ENCODE measurements at regions of chr17 and their contacts with region 1.

Region 1: DNA sequence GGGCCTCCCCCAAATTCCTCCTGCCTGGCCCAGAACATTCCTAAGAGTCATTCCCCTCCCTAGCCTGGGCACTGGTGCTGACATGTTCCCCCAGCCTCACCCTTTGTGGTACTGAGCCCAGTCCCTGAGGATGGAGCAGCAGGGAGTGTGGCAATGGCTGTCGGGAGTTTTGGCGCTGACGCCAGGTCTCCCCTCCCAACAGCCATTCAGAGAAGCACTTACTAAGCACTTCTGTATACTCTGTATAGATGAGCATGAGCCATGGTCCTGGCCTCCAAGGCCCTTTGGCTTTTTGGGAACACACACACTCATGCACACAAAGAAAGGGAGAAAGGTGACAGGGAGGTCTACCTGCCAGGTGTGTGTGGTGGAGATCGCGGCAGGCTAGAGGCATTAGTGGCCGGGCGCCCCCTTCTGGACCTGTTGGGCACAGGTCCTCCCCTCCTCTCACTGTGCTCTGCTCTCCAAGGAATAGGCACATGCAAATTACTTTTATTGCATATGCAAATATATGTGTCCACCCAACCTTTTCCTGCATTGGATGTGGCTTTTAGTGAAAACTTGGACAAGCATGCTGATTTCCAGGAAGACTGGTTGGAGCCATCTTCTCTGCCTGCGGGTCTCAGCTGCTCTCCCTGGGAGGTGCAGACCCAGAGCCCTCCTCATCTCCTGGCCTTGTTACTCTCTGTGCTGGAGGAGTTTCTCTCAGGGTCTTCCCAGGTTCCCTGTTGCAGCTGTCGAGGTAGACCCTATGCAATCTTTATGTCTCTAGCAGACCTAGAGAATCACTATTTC is 17.4 kb upstream of the C17orf107 start:
- DNase-seq: peak; percentile 77
- ATAC-seq: peak; percentile 78

Region 2: GRCh38 chr17:4789901-4790704 is 91.9 kb before region 1 on chr17:
- intact Hi-C with region 1: loop called (anchors 10 kb)
- DNase-seq: peak; percentile 93
- ATAC-seq: peak; percentile 95

Region 3: DNA sequence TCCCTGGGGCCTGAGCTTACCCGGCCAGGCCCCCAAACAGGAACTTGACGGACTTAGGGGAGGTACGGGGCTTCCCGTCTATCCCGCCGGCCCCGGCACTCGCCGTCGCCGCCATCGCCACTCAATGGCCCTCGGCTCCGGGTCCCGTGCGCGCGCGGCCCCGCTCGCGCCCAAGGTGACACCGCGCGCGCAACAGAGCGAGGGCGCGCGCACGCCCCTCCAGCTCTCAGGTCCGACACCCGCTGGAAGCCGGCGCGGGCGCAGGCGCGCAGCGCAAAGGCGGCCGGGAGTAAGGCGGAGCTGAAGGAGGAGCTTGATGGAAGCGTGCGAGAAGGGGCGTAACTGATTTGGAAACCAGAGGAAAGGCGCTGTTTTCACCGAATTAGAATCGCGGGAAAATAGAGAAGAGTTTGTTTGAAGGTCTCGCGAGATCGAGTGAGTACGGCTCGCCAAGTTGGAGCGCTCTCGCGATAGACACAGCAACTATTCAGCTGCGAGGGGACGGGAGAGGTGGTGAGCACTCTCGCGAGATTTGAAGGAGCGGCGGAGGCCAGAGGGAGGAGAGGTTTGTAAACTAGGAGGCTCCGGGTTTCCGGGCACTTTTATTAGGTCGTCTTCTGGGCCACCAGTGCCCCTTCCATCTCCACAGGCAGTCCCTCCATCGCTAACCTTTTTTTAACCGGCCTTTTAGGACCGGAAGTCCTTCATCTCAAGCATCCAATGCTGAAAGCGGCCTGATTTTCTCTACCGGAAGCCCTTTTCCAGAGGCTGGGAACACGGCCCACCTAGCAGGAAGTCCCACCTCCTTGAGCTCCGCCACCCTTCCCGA is 58.1 kb after region 1 on chr17 and contains the starts of genes RNF167 and SLC25A11:
- intact Hi-C with region 1: no loop called
- DNase-seq: peak; percentile 96
- ATAC-seq: peak; percentile 94
- total RNA-seq, gene RNF167: 104 TPM
- total RNA-seq, gene SLC25A11: 246 TPM